Activated CD4-positive, alpha-beta T cell treated with anti-CD3 and anti-CD28 coated beads for 36 hours (primary cell): ENCODE measurements at regions of chr18 and their contacts with region 1.

Region 1: GRCh38 chr18:42114310-42114943 is 159.4 kb downstream of the PIK3C3 start:
- DNase-seq: peak; percentile 71
- ATAC-seq: peak; percentile 81
- H3K4me3 Mint-ChIP-seq: no peak overlapping the region
- H3K27ac Mint-ChIP-seq: peak overlapping the region; percentile 29
- H3K4me1 Mint-ChIP-seq: peaks cover 10% of the 10 kb centered on the region
- H3K27me3 Mint-ChIP-seq: peaks cover 3% of the 10 kb centered on the region

Region 2: GRCh38 chr18:42053188-42053781 is 61.1 kb before region 1 on chr18:
- CTCF ChIA-PET with region 1: interaction called, 18 read pairs
- POLR2A ChIA-PET with region 1: no interaction called
- intact Hi-C with region 1: loop called in 1 of 2 experiments (anchors 1 kb)
- DNase-seq: peak; percentile 81
- ATAC-seq: peak; percentile 80
- H3K4me3 Mint-ChIP-seq: no peak overlapping the region
- H3K27ac Mint-ChIP-seq: no peak overlapping the region
- H3K4me1 Mint-ChIP-seq: peaks cover 15% of the 10 kb centered on the region
- H3K27me3 Mint-ChIP-seq: no peaks in the 10 kb centered on the region

Region 3: GRCh38 chr18:42126586-42126985 is 12.2 kb after region 1 on chr18:
- CTCF ChIA-PET with region 1: interaction called, 25 read pairs
- POLR2A ChIA-PET with region 1: interaction called, 8 read pairs
- intact Hi-C with region 1: no loop called
- DNase-seq: no peak
- ATAC-seq: no peak
- H3K4me3 Mint-ChIP-seq: no peak overlapping the region
- H3K27ac Mint-ChIP-seq: no peak overlapping the region
- H3K4me1 Mint-ChIP-seq: no peaks in the 10 kb centered on the region
- H3K27me3 Mint-ChIP-seq: peaks cover 10% of the 10 kb centered on the region

Region 4: GRCh38 chr18:42298759-42299675 is 184.6 kb after region 1 on chr18:
- CTCF ChIA-PET with region 1: interaction called, 12 read pairs
- POLR2A ChIA-PET with region 1: no interaction called
- intact Hi-C with region 1: loop called (anchors 5 kb)
- DNase-seq: peak; percentile 77
- ATAC-seq: no peak
- H3K4me3 Mint-ChIP-seq: no peak overlapping the region
- H3K27ac Mint-ChIP-seq: no peak overlapping the region
- H3K4me1 Mint-ChIP-seq: no peaks in the 10 kb centered on the region
- H3K27me3 Mint-ChIP-seq: peaks cover 6% of the 10 kb centered on the region

Region 5: GRCh38 chr18:43396266-43396665 is 1281.8 kb after region 1 on chr18:
- CTCF ChIA-PET with region 1: no interaction called
- POLR2A ChIA-PET with region 1: no interaction called
- intact Hi-C with region 1: loop called in 1 of 2 experiments (anchors 5 kb)
- DNase-seq: no peak
- ATAC-seq: no peak
- H3K4me3 Mint-ChIP-seq: no peak overlapping the region
- H3K27ac Mint-ChIP-seq: no peak overlapping the region
- H3K4me1 Mint-ChIP-seq: no peaks in the 10 kb centered on the region
- H3K27me3 Mint-ChIP-seq: no peaks in the 10 kb centered on the region

Region 6: DNA sequence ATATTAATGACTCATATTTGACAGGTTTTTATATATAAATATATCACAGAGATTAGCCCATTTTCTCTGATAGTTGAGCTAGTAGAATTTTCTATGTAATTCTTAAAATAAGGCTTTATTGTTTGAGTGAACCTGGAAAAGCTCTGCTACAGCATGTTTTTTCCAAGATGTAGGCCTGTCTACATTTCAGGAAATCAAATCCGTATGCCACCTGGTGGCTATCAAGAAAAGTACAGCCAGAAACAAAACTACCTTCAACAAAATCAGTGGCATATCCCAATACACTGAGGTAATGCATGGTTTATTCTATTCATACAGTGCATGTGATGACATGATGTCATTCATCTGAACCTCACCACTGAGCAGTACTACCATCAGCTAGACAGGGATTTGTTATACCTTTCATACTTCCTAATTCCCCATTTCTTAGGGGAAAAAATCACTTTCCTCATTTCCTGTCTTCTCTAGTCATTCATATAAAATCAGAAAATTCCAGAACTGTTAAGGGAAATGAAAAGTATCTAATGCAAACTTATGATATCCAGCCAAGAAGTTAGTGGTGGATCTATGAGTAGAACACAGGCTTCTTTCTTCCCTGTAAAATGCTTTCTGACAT is 1473.2 kb after region 1 on chr18:
- CTCF ChIA-PET with region 1: interaction called, 7 read pairs
- POLR2A ChIA-PET with region 1: no interaction called
- intact Hi-C with region 1: loop called (anchors 1 kb)
- DNase-seq: no peak
- ATAC-seq: peak; percentile 36
- H3K4me3 Mint-ChIP-seq: no peak overlapping the region
- H3K27ac Mint-ChIP-seq: no peak overlapping the region
- H3K4me1 Mint-ChIP-seq: no peaks in the 10 kb centered on the region
- H3K27me3 Mint-ChIP-seq: no peaks in the 10 kb centered on the region